MCF 10A (cell line): ENCODE measurements at regions of chr2 and their contacts with region 1.

Region 1: DNA sequence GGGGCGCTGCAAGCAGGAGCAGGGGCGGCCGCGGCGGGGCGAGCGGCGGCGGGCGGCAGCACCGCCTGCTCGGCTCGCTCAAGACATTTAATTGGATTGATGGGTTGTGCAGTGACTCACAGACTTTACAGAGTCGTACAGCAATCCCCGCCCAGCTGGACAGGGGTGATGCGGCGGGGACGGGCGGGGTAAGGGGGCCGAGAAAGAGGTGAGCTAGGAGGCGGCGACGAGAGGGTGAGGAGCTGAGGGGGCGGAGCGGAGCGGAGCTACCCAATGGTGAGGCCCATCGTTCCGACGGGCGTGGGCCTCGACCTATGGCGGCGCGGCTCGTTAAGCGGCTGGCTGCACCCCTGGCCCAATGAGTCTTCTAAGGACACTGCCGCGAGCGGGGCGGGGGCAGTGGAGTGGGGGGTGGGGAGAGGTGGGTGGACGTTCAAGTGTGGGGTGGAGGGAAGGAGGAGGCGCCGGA is 97.1 kb upstream of the SERTAD2 start:
- DNase-seq: peak; percentile 99
- H3K4me3 Mint-ChIP-seq: peak overlapping the region; percentile 87
- H3K27ac Mint-ChIP-seq: no peak overlapping the region
- H3K4me1 Mint-ChIP-seq: peaks cover 21% of the 10 kb centered on the region
- H3K27me3 Mint-ChIP-seq: no peaks in the 10 kb centered on the region
- CTCF ChIP-seq: no peak

Region 2: DNA sequence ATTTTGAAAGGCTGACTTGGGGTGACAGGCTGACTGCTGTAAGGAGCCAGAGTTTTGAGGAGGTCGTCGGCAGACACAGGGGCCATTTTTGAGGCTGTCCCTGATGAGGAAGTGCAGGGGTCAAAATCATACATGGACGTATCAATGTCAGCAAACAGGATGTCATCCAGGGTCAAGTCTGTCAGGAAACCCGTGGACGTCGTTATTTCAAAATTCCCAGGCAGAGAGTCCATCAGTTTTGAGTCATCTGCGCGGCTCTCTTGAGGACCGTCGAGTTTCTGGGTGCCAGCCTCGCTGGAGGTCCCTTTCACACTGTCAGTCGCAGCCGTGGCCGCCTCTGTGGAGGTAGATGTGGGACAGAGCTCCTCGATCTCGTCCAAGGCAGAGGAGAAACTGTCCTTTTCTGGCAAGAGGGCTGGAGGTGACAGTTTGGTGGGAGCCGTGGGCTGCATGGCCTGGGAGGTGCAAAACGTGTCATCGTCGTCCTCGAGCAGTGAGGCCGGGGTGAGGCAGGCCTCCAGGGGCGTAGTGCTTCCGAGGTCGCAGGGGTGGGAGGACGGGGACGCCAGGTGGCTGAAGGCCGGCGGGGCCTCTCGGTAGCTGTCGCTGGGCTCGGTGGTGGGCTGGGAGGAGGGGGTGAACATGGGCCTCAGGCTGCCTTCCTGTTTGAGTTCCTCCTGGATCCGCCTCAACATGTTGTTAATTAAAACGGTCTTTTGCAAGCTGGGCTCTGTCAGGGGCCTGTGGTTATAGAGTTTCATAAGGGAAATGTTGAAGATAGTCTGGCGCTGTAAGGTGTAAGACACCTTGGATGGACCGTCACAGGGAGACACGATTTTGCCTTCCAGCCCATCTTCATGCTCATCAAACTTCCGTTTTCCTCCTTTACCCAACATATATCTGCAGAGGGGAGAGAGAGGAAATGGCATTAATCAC is 114.6 kb before region 1 on chr2:
- CTCF ChIA-PET with region 1: no interaction called
- POLR2A ChIA-PET with region 1: interaction called, 27 read pairs
- intact Hi-C with region 1: no loop called
- DNase-seq: no peak
- H3K4me3 Mint-ChIP-seq: no peak overlapping the region
- H3K27ac Mint-ChIP-seq: no peak overlapping the region
- H3K4me1 Mint-ChIP-seq: peaks cover 21% of the 10 kb centered on the region
- H3K27me3 Mint-ChIP-seq: no peaks in the 10 kb centered on the region
- CTCF ChIP-seq: no peak

Region 3: DNA sequence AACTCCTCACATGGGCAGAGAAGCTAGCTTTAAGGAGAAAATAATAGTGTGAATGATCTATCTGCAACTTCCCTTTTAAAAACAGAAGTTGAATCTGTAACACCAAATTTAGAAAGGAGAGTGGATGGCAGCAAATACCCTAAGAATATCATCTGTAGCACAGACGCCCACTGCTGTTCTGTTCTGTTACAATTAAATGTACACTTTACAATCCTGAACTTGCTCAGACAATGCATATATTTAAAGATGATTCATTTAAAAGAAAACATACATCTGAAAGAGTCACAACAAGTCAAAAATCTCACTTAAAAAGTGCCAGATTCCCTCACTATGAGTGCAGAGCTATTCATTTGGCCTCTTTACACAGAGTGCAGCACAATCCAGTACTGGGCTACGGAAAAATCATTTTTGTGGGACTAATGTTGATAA is 89.1 kb before region 1 on chr2:
- CTCF ChIA-PET with region 1: interaction called, 3 read pairs
- POLR2A ChIA-PET with region 1: interaction called, 724 read pairs
- intact Hi-C with region 1: no loop called
- DNase-seq: no peak
- H3K4me3 Mint-ChIP-seq: no peak overlapping the region
- H3K27ac Mint-ChIP-seq: no peak overlapping the region
- H3K4me1 Mint-ChIP-seq: no peaks in the 10 kb centered on the region
- H3K27me3 Mint-ChIP-seq: no peaks in the 10 kb centered on the region
- CTCF ChIP-seq: no peak

Region 4: GRCh38 chr2:64738026-64738425 is 12.8 kb before region 1 on chr2:
- CTCF ChIA-PET with region 1: interaction called, 3 read pairs
- POLR2A ChIA-PET with region 1: interaction called, 18 read pairs
- intact Hi-C with region 1: no loop called
- DNase-seq: no peak
- H3K4me3 Mint-ChIP-seq: no peak overlapping the region
- H3K27ac Mint-ChIP-seq: no peak overlapping the region
- H3K4me1 Mint-ChIP-seq: peaks cover 6% of the 10 kb centered on the region
- H3K27me3 Mint-ChIP-seq: no peaks in the 10 kb centered on the region
- CTCF ChIP-seq: no peak

Region 5: GRCh38 chr2:64831134-64831976 is 80.5 kb after region 1 on chr2:
- CTCF ChIA-PET with region 1: interaction called, 3 read pairs
- POLR2A ChIA-PET with region 1: interaction called, 63 read pairs
- intact Hi-C with region 1: loop called (anchors 1 kb)
- DNase-seq: peak; percentile 98
- H3K4me3 Mint-ChIP-seq: peak overlapping the region; percentile 23
- H3K27ac Mint-ChIP-seq: peak overlapping the region; percentile 91
- H3K4me1 Mint-ChIP-seq: peaks cover 30% of the 10 kb centered on the region
- H3K27me3 Mint-ChIP-seq: no peaks in the 10 kb centered on the region
- CTCF ChIP-seq: peak; percentile 85

Region 6: DNA sequence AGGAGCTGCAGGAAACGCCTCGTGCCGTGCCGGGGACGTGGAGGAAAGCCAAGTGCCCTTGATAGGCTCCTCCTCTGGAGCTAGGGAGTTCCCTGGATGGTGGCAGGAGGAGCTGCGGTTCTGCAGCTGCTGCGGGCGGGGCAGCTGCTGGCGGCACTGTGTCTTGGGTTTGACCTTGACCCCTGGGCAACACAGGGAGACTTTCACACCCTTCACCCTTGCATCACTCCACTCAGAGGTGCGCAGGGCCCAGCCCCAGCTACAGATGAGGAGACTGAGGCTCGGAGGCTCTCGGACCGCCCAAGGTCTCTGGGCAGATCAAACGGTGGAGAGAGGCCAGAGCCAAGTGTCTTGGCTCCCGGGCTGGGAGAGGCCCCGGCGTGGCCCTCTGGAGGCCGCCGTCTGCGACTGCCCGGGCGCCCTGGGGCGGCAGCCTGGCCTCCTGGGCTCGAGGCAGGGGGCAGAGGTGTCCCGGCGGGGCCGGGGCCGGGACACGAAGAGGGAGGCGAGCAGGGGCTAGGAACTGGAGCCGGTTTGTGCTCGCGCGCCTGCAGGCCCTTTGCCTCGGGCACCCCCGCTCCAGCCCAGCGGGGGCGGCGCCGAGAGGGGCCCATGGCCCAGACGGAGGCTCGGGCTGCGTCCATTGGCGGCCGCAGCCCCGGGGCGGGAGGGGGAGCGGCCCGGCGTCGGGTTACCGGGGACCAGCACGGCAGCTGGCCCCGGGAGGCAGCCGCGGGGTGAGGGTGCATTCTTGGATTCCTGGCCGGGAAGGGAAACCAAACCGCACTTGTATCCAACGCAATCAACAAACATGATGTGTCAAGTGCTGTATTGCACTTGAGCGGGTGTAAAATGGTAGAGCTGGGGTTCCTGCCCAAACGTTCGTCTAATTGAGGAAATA is 108.7 kb after region 1 on chr2:
- CTCF ChIA-PET with region 1: no interaction called
- POLR2A ChIA-PET with region 1: interaction called, 109 read pairs
- intact Hi-C with region 1: loop called (anchors 1 kb)
- DNase-seq: peak; percentile 96
- H3K4me3 Mint-ChIP-seq: no peak overlapping the region
- H3K27ac Mint-ChIP-seq: no peak overlapping the region
- H3K4me1 Mint-ChIP-seq: peaks cover 11% of the 10 kb centered on the region
- H3K27me3 Mint-ChIP-seq: no peaks in the 10 kb centered on the region
- CTCF ChIP-seq: peak; percentile 15